Aorta (tissue), 5 donors: ENCODE measurements at regions of chr2 and their contacts with region 1.

Region 1: GRCh38 chr2:215693193-215693998 is 257.5 kb upstream of the FN1 start:
- DNase-seq: no peak
- ATAC-seq: peak; percentile 72
- H3K4me3 ChIP-seq: no peak overlapping the region
- H3K27ac ChIP-seq: peak overlapping the region; percentile 26 to 99
- H3K4me1 ChIP-seq: peaks cover 4 to 13% of the 10 kb centered on the region in 2 donors
- H3K27me3 ChIP-seq: no peaks in the 10 kb centered on the region

Region 2: DNA sequence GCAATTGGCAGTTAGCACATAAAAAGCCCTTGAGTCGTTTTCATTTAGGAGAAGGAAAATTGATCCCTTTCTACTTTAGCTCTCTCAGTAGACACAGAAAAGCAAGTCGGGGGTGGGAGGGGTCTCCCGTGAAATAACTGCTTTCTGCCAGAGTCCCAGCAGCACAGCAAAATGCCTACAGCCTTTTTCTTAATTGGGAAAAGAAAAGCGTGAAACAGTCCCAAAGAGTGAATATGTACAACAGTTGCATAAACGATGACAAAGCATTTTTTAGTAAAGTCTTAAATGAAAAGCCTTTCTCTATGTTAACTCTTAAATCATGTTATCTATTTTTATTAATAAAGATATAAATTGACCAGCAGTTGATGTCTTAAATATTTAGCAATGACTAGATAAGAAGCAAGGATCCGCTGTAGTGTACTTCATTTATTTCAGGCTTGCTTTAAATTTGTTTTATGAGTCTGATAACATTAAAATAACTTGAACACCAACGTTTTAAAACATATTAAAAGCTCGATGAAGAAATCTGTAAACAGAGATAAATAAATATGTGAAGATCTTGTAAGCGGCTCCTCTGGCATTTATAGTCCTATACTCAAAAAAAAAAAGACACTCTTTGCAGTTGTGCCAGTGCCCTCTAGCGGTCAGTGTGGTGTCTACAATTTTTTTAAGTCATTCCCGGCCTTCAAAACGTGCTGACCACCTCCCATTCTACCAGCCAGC is 423.8 kb before region 1 on chr2:
- intact Hi-C with region 1: no loop called
- DNase-seq: peak in 1 of 2 donors; percentile 55
- ATAC-seq: peak; percentile 79
- H3K4me3 ChIP-seq: peak overlapping the region in 1 of 2 donors; percentile 54
- H3K27ac ChIP-seq: no peak overlapping the region
- H3K4me1 ChIP-seq: no peaks in the 10 kb centered on the region
- H3K27me3 ChIP-seq: no peaks in the 10 kb centered on the region

Region 3: GRCh38 chr2:215454519-215455246 is 238.7 kb before region 1 on chr2:
- intact Hi-C with region 1: loop called in 1 of 2 experiments (anchors 10 kb)
- DNase-seq: no peak
- ATAC-seq: peak; percentile 86
- H3K4me3 ChIP-seq: no peak overlapping the region
- H3K27ac ChIP-seq: no peak overlapping the region
- H3K4me1 ChIP-seq: no peaks in the 10 kb centered on the region
- H3K27me3 ChIP-seq: no peaks in the 10 kb centered on the region

Region 4: GRCh38 chr2:215609089-215610032 is 84.0 kb before region 1 on chr2:
- intact Hi-C with region 1: loop called in 1 of 2 experiments (anchors 10 kb)
- DNase-seq: no peak
- ATAC-seq: peak; percentile 34
- H3K4me3 ChIP-seq: no peak overlapping the region
- H3K27ac ChIP-seq: no peak overlapping the region
- H3K4me1 ChIP-seq: no peaks in the 10 kb centered on the region
- H3K27me3 ChIP-seq: no peaks in the 10 kb centered on the region

Region 5: GRCh38 chr2:215657844-215658243 is 35.6 kb before region 1 on chr2:
- intact Hi-C with region 1: loop called in 1 of 2 experiments (anchors 5 kb)
- DNase-seq: no peak
- ATAC-seq: peak; percentile 51
- H3K4me3 ChIP-seq: no peak overlapping the region
- H3K27ac ChIP-seq: peak overlapping the region in 1 of 2 donors; percentile 79
- H3K4me1 ChIP-seq: peaks cover 7 to 11% of the 10 kb centered on the region in 2 donors
- H3K27me3 ChIP-seq: no peaks in the 10 kb centered on the region

Region 6: GRCh38 chr2:215728504-215729087 is 35.2 kb after region 1 on chr2:
- intact Hi-C with region 1: no loop called
- DNase-seq: peak in 1 of 2 donors; percentile 70
- ATAC-seq: peak; percentile 73
- H3K4me3 ChIP-seq: no peak overlapping the region
- H3K27ac ChIP-seq: no peak overlapping the region
- H3K4me1 ChIP-seq: peaks cover 0 to 4% of the 10 kb centered on the region in 2 donors
- H3K27me3 ChIP-seq: no peaks in the 10 kb centered on the region

Region 7: GRCh38 chr2:217118559-217119284 is 1425.3 kb after region 1 on chr2:
- intact Hi-C with region 1: no loop called
- DNase-seq: no peak
- ATAC-seq: no peak
- H3K4me3 ChIP-seq: no peak overlapping the region
- H3K27ac ChIP-seq: no peak overlapping the region
- H3K4me1 ChIP-seq: no peaks in the 10 kb centered on the region
- H3K27me3 ChIP-seq: no peaks in the 10 kb centered on the region